ENCODE measurements at regions of chr5 and their contacts with region 1.

Region 1: GRCh38 chr5:150217873-150218692 is 28.2 kb downstream of the SLC6A7 start:
- DNase-seq: peak; percentile 67
- H3K4me3 Mint-ChIP-seq: no peak overlapping the region
- H3K27ac Mint-ChIP-seq: no peak overlapping the region
- H3K4me1 Mint-ChIP-seq: no peaks in the 10 kb centered on the region
- H3K27me3 Mint-ChIP-seq: peaks cover 13% of the 10 kb centered on the region

Region 2: DNA sequence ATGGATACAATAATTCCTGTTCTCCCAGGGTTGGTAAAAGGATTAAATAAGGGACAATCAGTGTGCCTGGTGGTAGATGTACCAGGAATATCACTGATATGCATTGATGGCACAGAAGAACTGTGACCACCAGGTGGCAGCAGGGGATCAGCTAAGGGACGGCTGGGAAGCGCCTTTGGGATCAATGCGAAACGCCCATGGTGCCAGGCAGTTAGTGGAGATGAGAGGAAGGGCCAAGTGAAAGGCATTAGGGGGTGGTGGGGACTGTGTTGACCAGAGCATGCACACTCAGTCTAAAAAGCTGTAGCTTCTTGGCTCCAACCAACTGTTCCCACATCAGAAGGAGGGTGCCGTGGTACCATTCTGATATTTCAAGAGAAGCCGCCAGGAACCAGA is 581.2 kb before region 1 on chr5:
- intact Hi-C with region 1: loop called (anchors 1 kb)
- DNase-seq: no peak
- H3K4me3 Mint-ChIP-seq: no peak overlapping the region
- H3K27ac Mint-ChIP-seq: no peak overlapping the region
- H3K4me1 Mint-ChIP-seq: peaks cover 20% of the 10 kb centered on the region
- H3K27me3 Mint-ChIP-seq: peaks cover 2% of the 10 kb centered on the region

Region 3: DNA sequence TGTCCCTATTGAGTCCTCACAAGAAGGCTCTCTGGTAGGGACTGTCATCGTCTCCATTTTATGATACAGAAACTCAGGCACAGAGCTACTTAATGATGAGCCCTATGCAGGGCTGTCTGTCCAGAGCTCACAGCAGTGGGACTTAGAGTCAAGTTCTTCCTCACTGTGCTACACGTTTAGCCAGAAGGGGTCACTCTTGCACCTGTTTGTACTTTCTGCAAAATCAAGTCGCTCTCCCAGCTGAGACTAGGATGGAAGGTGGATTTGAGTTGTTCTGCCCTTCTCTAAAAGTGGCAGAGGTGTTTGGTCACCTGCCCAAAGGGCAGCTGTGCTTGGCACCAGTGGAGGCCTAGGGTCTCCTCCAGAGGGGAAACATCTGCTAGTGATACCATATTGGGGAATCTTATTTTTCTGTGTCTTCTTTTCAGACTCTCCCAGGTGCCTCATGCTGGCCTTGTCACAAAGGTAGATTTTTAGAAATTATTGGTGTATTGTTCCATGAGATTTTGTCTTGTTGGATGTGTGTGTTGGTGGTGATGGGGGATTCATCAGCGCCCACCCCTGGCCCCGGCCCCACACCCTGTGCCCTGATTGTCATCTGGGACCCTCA is 383.7 kb before region 1 on chr5:
- intact Hi-C with region 1: loop called (anchors 2 kb)
- DNase-seq: peak; percentile 50
- H3K4me3 Mint-ChIP-seq: no peak overlapping the region
- H3K27ac Mint-ChIP-seq: no peak overlapping the region
- H3K4me1 Mint-ChIP-seq: peaks cover 13% of the 10 kb centered on the region
- H3K27me3 Mint-ChIP-seq: no peaks in the 10 kb centered on the region

Region 4: DNA sequence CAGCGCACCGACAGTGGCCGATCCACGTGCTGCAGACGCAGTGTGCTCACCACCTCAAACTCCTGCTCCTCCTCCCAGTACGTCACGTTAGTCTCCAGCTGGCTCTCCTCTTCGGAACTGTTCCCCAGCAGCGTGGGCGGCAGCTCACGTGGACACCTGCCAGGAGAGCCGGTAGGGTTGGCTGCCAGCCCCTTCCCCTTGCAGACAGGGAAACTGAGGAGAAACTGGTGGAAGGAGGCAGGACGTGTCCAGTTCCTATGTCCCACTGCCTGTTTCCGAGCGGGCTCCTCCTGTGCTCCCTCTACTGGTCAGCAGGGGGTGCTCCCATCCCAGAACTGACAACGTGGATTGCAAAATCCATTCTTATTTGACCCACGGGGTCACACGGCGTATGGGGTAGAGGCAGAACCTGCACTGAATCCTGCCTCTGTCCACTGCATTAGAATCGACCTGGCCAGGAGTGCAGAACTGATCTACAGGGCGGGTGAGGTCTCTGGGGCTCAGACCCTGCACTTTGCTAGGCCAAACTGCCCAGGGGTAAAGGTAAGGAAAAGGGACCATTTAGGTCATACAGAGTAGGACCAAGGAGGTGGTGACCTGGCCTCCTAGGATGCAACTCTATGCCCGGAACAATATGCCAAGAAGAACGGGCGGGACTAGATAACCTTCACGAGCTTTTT is 88.1 kb before region 1 on chr5:
- intact Hi-C with region 1: loop called (anchors 1 kb)
- DNase-seq: peak; percentile 44
- H3K4me3 Mint-ChIP-seq: no peak overlapping the region
- H3K27ac Mint-ChIP-seq: no peak overlapping the region
- H3K4me1 Mint-ChIP-seq: peaks cover 5% of the 10 kb centered on the region
- H3K27me3 Mint-ChIP-seq: peaks cover 2% of the 10 kb centered on the region

Region 5: GRCh38 chr5:150161242-150162141 is 56.6 kb before region 1 on chr5:
- intact Hi-C with region 1: loop called (anchors 1 kb)
- DNase-seq: peak; percentile 68
- H3K4me3 Mint-ChIP-seq: no peak overlapping the region
- H3K27ac Mint-ChIP-seq: no peak overlapping the region
- H3K4me1 Mint-ChIP-seq: no peaks in the 10 kb centered on the region
- H3K27me3 Mint-ChIP-seq: peaks cover 21% of the 10 kb centered on the region

Region 6: GRCh38 chr5:150357326-150358260 is 139.5 kb after region 1 on chr5 and contains the start of gene TCOF1:
- intact Hi-C with region 1: no loop called
- DNase-seq: peak; percentile 97
- H3K4me3 Mint-ChIP-seq: peak within 1 kb of the TSS; percentile 93
- H3K27ac Mint-ChIP-seq: peak within 1 kb of the TSS; percentile 91
- H3K4me1 Mint-ChIP-seq: peaks cover 39% of the 10 kb centered on the region
- H3K27me3 Mint-ChIP-seq: no peaks in the 10 kb centered on the region
- total RNA-seq, gene TCOF1: 130 and 131 TPM in 2 replicates

Measured in activated T-helper 1 cell treated with anti-CD3 and anti-CD28 coated beads, Interleukin-12 subunit alpha, Interleukin-12 subunit beta, Interleukin-2, Interleukin-4 antibody, amounts not matched to agents 30 ng/mL and 10 ng/mL and 1 ng/mL, durations not matched to agents 14 hours and 24 hours and 36 hours (primary cell).